GM12878 (cell line): ENCODE measurements at regions of chr1 and their contacts with region 1.

Region 1: GRCh38 chr1:28144203-28145135 is 32.0 kb downstream of the PTAFR start:
- DNase-seq: peak; percentile 97
- ATAC-seq: peak; percentile 91
- H3K4me3 ChIP-seq: peak overlapping the region; percentile 17
- H3K27ac ChIP-seq: peak overlapping the region; percentile 62
- H3K4me1 ChIP-seq: peaks cover 51% of the 10 kb centered on the region
- H3K27me3 ChIP-seq: no peaks in the 10 kb centered on the region
- CTCF ChIP-seq: no peak
- EP300 ChIP-seq: peak; percentile 54 to 94; a peak in 3 of 4 replicates
- POLR2A ChIP-seq: no peak
- RAD21 ChIP-seq: no peak

Region 2: DNA sequence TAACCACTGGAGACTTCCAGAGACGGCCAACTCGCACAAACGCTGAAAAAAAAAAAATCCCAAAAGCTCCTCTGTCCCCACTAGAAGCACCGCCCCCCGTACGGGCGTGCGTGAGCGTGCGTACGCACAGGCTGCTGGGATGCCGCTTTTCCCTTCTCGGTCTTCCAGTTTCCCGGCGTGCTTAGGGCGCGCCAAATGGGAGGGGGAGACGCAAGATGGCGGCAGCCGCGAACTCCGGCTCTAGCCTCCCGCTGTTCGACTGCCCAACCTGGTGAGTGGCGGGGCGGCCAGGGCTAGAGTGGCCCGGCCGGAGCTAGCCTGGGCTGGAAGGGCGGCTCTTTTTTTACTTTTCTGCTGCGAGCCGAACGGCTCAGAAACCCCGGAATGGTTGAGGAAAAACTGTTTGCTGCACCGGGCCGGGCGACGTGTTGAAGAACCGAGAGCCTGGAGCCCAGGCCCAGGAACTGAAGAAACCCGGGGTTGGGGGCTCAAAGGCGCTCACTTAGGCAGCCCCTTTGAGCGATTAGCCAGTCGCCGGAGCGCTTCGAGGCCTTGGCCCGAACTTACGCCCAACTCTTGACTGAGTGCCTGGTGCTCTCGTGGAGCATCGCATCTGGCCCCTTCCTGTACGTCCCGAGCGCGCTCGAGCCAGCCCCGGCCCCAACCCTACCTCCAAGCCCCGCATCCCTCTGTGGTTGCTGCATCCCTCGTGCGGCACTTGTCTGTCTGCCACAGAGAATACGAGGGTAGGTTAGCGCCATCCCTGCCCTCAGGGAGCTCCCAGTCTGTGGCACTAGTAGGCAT is 313.6 kb before region 1 on chr1 and contains the start of gene PPP1R8:
- CTCF ChIA-PET with region 1: no interaction called
- POLR2A ChIA-PET with region 1: no interaction called
- RAD21 ChIA-PET with region 1: no interaction called
- SMC1A ChIA-PET with region 1: no interaction called
- in situ Hi-C with region 1: no loop called
- intact Hi-C with region 1: no loop called
- DNase-seq: peak; percentile 72
- ATAC-seq: peak; percentile 99
- H3K4me3 ChIP-seq: peak within 1 kb of the TSS; percentile 90
- H3K27ac ChIP-seq: peak within 1 kb of the TSS; percentile 87
- H3K4me1 ChIP-seq: no peaks in the 10 kb centered on the region
- H3K27me3 ChIP-seq: no peaks in the 10 kb centered on the region
- CTCF ChIP-seq: no peak
- EP300 ChIP-seq: 0 out of 4 replicates have a peak, but pooled peaks of 1 of the 2 experiments have one; percentile 8
- POLR2A ChIP-seq: peak; percentile 97
- RAD21 ChIP-seq: no peak
- polyA plus RNA-seq, gene PPP1R8: 14.5 to 15.3 TPM

Region 3: DNA sequence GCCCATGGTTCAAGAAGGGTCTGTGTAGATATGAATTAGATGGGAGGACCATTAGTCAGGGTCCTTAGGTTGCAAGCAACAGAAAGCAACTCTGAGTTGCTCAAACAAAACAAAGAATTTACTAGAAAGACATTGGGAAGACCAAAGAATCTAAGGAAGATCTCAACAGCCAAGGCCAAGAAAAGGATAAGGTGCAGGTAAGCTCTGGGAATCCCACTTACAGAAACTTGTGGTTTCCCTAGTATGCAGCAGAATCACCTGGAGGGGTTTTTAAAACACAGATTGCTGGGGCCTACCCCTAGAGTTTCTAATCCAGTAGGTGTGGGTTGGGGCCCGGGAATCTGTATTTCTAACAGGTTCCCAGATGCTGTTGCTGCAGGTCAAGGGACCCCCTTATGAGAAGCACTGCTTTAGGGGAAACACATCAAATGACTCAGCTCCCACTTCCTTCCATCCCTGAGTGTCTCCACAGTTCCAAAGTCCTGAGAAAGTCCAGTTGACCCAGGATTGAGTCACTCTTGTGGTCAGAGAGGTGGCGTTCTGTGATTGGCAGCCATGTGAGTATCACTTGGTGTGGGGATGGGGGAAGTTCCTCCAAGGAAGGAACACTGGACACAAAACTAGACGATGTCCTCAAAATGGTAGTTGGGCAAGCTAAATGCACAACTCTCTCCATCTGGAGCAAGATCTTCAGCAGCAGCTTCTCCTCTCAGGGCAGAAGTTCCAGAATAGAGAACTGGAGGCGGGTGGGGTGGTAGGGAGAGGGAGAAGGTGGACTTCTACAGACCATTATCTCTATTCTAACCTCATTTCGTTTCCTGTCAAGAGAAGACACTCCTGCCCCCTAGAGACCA is 31.9 kb before region 1 on chr1:
- CTCF ChIA-PET with region 1: no interaction called
- POLR2A ChIA-PET with region 1: interaction called, 9 read pairs
- RAD21 ChIA-PET with region 1: interaction called, 5 read pairs
- SMC1A ChIA-PET with region 1: interaction called, 29 read pairs
- in situ Hi-C with region 1: no loop called
- intact Hi-C with region 1: loop called (anchors 2 kb)
- DNase-seq: no peak
- ATAC-seq: peak; percentile 43; the same call in 1 of the 3 replicates
- H3K4me3 ChIP-seq: no peak overlapping the region
- H3K27ac ChIP-seq: no peak overlapping the region
- H3K4me1 ChIP-seq: peaks cover 39% of the 10 kb centered on the region
- H3K27me3 ChIP-seq: no peaks in the 10 kb centered on the region
- CTCF ChIP-seq: peak in 1 of 3 experiments; percentile 48; a peak in 1 of 6 replicates
- EP300 ChIP-seq: no peak
- POLR2A ChIP-seq: no peak
- RAD21 ChIP-seq: peak; percentile 60

Region 4: DNA sequence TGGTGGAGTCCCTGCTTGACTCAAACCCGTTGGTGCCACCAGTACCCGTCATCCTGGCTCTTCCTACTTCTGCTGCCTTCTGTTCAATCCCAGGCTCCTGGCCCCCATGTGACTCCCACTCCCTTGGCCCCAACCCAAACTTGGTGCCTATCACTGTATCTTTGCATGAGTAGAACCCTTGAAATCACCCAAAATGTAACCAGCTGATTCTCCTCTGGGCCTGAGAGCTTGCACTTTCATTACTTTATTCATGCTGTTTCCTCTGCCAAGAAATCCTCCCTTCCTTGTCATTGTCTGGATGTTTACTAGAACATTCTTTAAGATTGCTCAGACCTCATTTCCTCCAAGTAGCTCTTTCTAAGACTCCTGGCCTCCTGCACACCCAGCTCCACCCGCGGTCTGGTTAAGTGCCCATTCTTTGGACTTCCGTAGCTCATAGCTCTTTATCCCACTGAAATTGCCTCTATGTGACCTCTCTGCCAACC is 16.4 kb after region 1 on chr1:
- CTCF ChIA-PET with region 1: interaction called, 6 read pairs
- POLR2A ChIA-PET with region 1: interaction called, 9 read pairs
- RAD21 ChIA-PET with region 1: interaction called, 3 read pairs
- SMC1A ChIA-PET with region 1: interaction called, 33 read pairs
- in situ Hi-C with region 1: no loop called
- intact Hi-C with region 1: no loop called
- DNase-seq: no peak
- ATAC-seq: no peak; the same call in 2 of the 3 replicates
- H3K4me3 ChIP-seq: no peak overlapping the region
- H3K27ac ChIP-seq: no peak overlapping the region
- H3K4me1 ChIP-seq: no peaks in the 10 kb centered on the region; the same call in 1 of the 2 replicates
- H3K27me3 ChIP-seq: no peaks in the 10 kb centered on the region
- CTCF ChIP-seq: no peak
- EP300 ChIP-seq: no peak
- POLR2A ChIP-seq: no peak
- RAD21 ChIP-seq: no peak

Region 5: DNA sequence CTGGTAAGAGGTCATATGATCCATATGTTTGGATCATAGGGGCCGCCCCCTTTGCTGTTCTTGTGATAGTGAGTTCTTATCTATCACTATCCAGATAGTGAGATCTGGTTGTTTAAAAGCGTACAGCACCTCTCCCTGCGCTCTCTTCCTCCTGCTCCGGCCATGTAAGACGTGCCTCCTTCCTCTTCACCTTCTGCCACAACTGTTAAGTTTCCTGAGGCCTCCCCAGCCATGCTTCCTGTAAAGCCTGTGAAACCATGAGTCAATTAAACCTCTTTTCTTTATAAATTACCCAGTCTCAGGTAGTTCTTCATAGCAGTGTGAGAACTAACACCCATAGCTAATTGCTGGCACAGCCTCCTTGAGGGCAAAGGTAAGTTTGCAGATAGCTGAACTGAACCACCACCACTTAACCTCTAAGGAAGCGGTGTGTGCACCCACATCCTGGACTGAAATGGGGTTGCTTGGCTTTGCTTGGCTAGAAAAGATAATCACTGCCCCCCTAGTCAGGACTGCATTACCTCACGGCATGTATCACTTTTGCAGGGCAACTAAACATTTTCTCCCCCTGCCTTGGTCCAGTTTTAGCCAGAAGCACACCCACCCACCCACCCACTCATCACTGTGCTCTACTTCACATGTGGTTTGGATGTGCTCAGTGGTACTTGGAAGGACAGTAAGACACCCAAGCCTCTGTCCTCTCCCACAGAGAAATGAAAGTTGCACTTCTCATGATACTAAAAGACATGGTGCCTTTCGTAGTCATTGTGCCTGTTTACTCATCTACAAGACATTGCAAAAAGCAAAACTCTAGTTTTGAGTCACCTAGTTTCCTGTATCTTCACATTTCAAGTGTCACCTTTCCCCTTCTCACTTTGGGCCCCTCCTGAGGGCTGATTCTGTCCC is 55.1 kb after region 1 on chr1:
- CTCF ChIA-PET with region 1: interaction called, 3 read pairs
- POLR2A ChIA-PET with region 1: interaction called, 5 read pairs
- RAD21 ChIA-PET with region 1: interaction called, 5 read pairs
- SMC1A ChIA-PET with region 1: interaction called, 12 read pairs
- in situ Hi-C with region 1: no loop called
- intact Hi-C with region 1: no loop called
- DNase-seq: peak; percentile 99
- ATAC-seq: peak; percentile 91
- H3K4me3 ChIP-seq: peak overlapping the region; percentile 57; the same call in 1 of the 2 replicates
- H3K27ac ChIP-seq: peak overlapping the region; percentile 83
- H3K4me1 ChIP-seq: peaks cover 44% of the 10 kb centered on the region
- H3K27me3 ChIP-seq: no peaks in the 10 kb centered on the region
- CTCF ChIP-seq: no peak
- EP300 ChIP-seq: peak; percentile 85 to 98
- POLR2A ChIP-seq: peak; percentile 58; the same call in 1 of the 2 replicates
- RAD21 ChIP-seq: peak; percentile 29; the same call in 1 of the 2 replicates

Region 6: GRCh38 chr1:28259307-28260167 is 115.1 kb after region 1 on chr1 and contains the start of gene SESN2:
- CTCF ChIA-PET with region 1: no interaction called
- POLR2A ChIA-PET with region 1: no interaction called
- RAD21 ChIA-PET with region 1: no interaction called
- SMC1A ChIA-PET with region 1: no interaction called
- in situ Hi-C with region 1: no loop called
- intact Hi-C with region 1: no loop called
- DNase-seq: peak; percentile 84
- ATAC-seq: peak; percentile 97
- H3K4me3 ChIP-seq: peak within 1 kb of the TSS; percentile 97
- H3K27ac ChIP-seq: peak within 1 kb of the TSS; percentile 55
- H3K4me1 ChIP-seq: peaks cover 5% of the 10 kb centered on the region
- H3K27me3 ChIP-seq: no peaks in the 10 kb centered on the region
- CTCF ChIP-seq: no peak
- EP300 ChIP-seq: no peak
- POLR2A ChIP-seq: peak; percentile 99
- RAD21 ChIP-seq: no peak
- polyA plus RNA-seq, gene SESN2: 1.5 to 2.7 TPM